ENCODE measurements at regions of chr7 and their contacts with region 1.

Region 1: DNA sequence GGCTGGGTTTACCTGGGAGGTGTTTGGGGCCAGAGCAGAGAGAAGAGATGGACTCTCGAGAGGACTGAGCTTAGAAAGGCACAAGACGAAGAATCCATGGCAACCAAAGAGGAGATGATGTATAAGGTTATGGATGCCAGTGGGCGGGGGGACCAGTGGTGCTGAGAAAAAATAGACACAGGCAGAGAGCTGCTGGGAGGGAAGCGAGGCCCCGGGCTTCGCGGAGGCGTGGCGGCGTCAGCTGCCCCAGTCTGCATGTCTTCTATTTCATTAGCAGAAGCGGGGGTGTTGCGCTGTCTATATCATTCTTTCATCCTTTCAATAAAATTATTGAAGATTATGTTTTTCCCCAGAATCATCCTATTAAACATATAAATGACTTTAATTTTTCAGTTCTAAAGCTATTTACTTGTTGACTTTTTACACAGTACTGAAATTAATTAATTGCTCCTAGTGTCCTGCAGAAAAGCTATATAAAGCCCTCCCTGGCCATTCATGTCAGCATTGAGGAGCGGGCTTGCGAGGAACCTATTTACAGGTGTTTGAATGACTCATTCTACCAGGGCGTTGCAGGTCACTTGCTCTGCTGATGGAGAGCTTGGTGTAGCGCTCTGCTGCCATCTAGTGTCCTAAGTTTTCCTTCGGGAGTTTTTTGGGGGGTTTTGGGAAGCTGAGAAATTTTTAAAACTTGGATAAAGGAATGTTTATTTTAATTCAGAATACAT is 42.9 kb upstream of the BHLHA15 start:
- DNase-seq: peak; percentile 66
- H3K4me3 ChIP-seq: no peak overlapping the region
- H3K27ac ChIP-seq: no peak overlapping the region
- H3K4me1 ChIP-seq: peaks cover 5% of the 10 kb centered on the region
- H3K27me3 ChIP-seq: no peaks in the 10 kb centered on the region
- CTCF ChIP-seq: peak; percentile 84 to 90 (median 88)
- POLR2A ChIP-seq: no peak

Region 2: DNA sequence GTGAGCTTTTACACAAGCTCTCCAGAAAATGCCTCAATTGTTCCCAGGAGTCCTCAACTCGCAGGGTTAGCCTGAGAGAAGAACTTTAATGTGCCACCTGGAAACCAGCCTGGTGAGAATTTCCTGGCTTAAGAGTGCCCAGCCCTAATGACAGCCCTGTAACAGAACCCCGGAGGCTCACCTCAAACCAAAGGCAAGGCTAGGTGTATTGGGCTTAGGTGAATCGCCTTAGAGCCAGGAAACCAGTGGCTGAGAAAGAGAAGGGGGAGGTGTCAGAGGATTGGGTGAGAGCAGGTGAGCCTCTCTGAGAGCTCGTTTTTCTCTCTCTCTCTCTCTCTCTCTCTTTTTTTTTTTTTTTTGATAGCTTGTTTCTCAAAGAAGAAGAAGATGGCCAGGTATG is 185.7 kb before region 1 on chr7:
- intact Hi-C with region 1: no loop called
- DNase-seq: no peak
- H3K4me3 ChIP-seq: no peak overlapping the region
- H3K27ac ChIP-seq: no peak overlapping the region
- H3K4me1 ChIP-seq: no peaks in the 10 kb centered on the region
- H3K27me3 ChIP-seq: no peaks in the 10 kb centered on the region
- CTCF ChIP-seq: no peak
- POLR2A ChIP-seq: no peak

Region 3: DNA sequence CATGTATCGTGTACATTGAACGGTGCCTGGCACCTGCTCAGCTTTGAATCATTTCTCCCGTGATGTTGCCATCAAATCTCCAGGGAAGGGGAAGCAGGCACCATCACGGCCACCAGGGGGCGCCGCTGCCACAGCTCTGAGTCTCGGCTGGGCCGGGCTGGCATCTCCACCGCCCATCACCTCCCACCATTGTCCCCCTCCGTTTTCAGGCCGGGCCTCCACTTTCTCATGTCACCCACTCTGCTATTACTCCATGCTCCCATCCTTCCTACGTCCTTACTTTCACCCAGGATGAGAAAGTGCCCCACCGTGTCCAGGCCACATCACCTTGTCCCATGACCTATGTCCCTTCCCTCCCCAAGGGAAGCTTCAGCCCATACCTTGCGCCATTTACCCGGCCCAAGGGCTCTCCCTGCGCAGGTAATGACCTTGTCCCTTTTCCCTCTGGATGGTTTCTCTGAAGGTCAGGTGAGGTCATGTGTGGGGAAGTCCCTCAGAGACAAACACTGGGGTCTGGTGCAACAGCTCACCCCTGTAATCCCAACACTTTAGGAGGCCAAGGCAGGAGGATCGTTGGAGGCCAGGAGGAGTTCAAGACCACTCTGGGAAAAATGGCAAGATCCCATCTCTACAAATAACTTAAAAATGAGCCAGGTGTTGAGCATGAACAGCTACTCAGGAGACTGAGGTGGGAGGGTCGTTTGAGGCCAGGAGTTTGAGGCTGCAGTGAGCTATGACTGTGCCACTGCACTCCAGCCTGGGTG is 146.6 kb before region 1 on chr7:
- intact Hi-C with region 1: loop called (anchors 5 kb)
- DNase-seq: peak; percentile 79
- H3K4me3 ChIP-seq: no peak overlapping the region
- H3K27ac ChIP-seq: no peak overlapping the region
- H3K4me1 ChIP-seq: no peaks in the 10 kb centered on the region
- H3K27me3 ChIP-seq: no peaks in the 10 kb centered on the region
- CTCF ChIP-seq: peak; percentile 93 to 97 (median 94)
- POLR2A ChIP-seq: no peak

Region 4: DNA sequence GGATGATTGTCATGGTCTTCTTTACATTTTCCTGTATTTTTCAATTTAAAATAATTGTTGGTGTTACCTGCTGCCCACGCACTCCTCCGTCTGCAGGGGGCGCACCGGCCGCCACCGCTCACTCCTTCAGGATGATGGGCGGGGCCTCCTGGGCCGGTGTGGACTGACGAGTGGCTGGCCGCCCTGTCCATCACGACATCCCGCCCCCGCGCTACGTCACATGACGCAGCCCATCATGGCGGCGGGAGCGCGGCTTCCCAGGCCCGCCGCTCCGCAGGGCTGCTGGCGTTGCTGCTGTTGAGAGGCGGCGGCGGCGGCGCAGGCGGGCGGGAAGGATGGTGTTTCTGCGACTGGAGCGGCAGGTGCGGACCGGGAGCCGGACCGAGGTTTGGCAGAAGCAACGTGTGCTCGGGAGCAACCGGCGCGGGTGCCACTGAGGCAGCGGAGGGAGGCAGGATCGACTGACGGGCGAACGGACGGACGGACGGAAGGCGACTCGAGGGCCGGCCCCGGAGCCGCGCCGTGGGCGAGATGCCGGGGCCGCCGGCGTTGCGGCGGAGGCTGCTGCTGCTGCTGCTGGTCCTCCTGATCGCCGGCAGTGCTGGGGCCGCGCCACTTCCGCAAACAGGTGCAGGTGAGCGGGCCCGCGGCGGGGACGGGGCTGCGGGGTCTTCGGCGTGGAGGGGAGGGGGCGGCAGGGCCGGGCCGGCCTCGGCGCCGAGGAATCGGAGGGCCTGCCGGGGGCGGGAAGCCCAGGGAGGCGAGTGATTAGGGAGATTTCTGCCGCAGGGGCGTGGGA is 61.5 kb before region 1 on chr7 and contains the start of gene LMTK2:
- intact Hi-C with region 1: loop called (anchors 1 kb)
- DNase-seq: peak; percentile 94
- H3K4me3 ChIP-seq: peak within 1 kb of the TSS; percentile 82 to 98
- H3K27ac ChIP-seq: peak within 1 kb of the TSS; percentile 83 to 87
- H3K4me1 ChIP-seq: peaks cover 13% of the 10 kb centered on the region
- H3K27me3 ChIP-seq: no peaks in the 10 kb centered on the region
- CTCF ChIP-seq: peak; percentile 97 to 99 (median 98)
- POLR2A ChIP-seq: peak; percentile 97
- total RNA-seq, gene LMTK2: 22.2 to 37.4 TPM

Region 5: DNA sequence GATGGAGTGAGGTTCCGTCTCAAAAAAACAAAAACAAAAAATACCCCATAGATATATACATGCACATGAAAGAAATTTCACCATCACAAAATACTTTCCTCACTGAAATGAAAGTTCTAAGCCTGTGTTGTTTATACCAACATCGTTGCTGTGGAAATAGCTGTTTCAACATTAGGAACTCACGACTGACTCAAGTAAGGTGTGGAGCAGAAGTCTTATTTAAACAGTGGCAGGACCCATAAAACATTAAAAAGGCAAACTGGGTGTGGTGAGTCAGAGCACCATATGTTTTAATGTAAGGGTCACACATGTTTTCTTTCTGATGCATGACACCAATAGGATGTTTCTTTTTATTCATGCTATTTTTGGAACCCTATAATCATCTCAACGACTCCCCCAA is 184.3 kb after region 1 on chr7:
- intact Hi-C with region 1: no loop called
- DNase-seq: peak; percentile 17
- H3K4me3 ChIP-seq: no peak overlapping the region
- H3K27ac ChIP-seq: no peak overlapping the region
- H3K4me1 ChIP-seq: no peaks in the 10 kb centered on the region
- H3K27me3 ChIP-seq: no peaks in the 10 kb centered on the region
- CTCF ChIP-seq: no peak
- POLR2A ChIP-seq: no peak

Measured in prostate gland (tissue), 2 donors.